ENCODE measurements at regions of chr13 and their contacts with region 1.

Region 1: GRCh38 chr13:19863323-19864023 is at the start of gene ZMYM5:
- DNase-seq: peak; percentile 100
- H3K4me3 ChIP-seq: peak within 1 kb of the TSS; percentile 70 to 94 (median 80)
- H3K27ac ChIP-seq: peak within 1 kb of the TSS; percentile 97 to 100 (median 99)
- H3K4me1 ChIP-seq: peaks cover 16 to 43% (median 25%) of the 10 kb centered on the region in 6 donors
- H3K27me3 ChIP-seq: no peaks in the 10 kb centered on the region
- CTCF ChIP-seq: peak in 7 of 11 experiments; percentile 10 to 70 (median 53)
- POLR2A ChIP-seq: peak; percentile 67 to 91 (median 72)
- total RNA-seq, gene ZMYM5: 13.2 to 24.4 (median 18.8) TPM

Region 2: GRCh38 chr13:19148561-19148960 is 714.9 kb before region 1 on chr13:
- intact Hi-C with region 1: no loop called
- DNase-seq: no peak
- H3K4me3 ChIP-seq: no peak overlapping the region
- H3K27ac ChIP-seq: no peak overlapping the region
- H3K4me1 ChIP-seq: peaks cover 0 to 11% (median 0%) of the 10 kb centered on the region in 6 donors
- H3K27me3 ChIP-seq: no peaks in the 10 kb centered on the region
- CTCF ChIP-seq: no peak
- POLR2A ChIP-seq: no peak

Region 3: DNA sequence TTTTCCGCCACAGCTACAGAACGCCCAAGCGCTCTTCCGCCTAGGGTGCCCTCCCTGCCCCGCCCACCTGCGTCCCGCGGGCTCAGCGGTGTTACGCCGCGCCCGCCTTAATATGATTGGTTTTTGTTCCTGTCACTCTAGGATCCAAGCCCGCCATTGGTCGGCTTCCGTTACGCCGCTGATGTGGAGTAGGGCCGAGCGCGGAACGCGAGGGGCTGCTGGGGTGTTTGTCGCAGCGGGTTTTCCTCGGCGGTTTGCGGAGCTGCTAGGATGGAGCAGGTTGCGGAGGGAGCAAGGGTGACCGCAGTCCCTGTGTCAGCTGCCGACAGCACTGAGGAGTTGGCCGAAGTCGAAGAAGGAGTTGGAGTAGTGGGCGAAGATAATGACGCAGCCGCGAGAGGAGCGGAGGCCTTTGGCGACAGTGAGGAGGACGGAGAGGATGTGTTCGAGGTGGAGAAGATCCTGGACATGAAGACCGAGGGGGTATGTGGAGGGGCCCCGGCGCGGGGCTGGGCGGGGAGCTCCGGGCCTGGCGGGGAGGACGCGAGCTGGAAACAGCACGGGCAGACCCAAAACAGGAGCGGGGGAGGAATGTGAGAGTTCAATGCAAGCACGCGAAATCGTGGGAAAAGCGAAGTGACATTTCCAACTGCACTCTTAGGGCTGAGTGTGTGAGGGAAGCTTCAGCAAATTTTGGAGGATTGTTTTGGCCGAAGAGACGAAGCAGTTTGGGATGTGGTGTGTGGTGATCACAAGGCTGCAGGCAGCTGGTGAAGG is 229.8 kb before region 1 on chr13 and contains the start of gene MPHOSPH8:
- intact Hi-C with region 1: loop called (anchors 10 kb)
- DNase-seq: peak; percentile 97
- H3K4me3 ChIP-seq: peak within 1 kb of the TSS; percentile 64 to 96 (median 77)
- H3K27ac ChIP-seq: peak within 1 kb of the TSS; percentile 87 to 98 (median 94)
- H3K4me1 ChIP-seq: peaks cover 14 to 55% (median 46%) of the 10 kb centered on the region in 6 donors
- H3K27me3 ChIP-seq: no peaks in the 10 kb centered on the region
- CTCF ChIP-seq: peak in 5 of 11 experiments; percentile 7 to 47 (median 22)
- POLR2A ChIP-seq: peak; percentile 5 to 57 (median 34)
- total RNA-seq, gene MPHOSPH8: 38.7 to 59.6 (median 47.7) TPM

Region 4: DNA sequence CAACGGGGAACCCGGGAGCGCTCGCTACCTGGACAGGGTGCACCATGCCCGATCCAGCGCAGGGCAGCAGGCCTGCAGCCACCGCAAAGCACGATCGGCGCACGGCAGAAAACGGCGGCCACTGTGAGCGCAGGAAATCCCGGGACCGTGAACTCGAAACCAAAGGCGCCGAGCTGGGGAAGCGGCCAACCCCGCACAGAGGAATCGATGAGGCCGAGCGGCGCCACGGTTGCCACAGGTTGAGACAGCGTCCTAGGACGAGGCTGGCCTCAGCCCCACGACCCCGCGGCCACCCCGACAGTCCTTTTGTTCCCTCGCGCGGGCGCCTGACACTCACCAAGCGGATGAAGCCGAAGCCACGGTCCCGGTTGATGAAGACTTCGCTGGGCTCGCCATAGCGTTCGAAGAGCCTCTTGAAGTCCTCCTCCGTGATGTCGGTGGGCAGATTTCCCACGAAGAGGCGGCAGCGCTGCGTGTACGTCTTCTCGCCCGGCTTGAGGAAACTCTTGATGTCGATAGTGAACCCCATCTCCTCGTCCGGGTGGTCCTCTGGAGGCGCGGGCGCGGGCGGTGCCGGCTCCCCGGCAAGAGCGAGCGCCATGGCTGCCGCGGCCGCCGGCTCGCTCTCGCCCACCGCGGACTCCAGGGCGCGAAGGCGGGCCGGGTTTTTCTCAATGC is 81.3 kb before region 1 on chr13:
- intact Hi-C with region 1: loop called (anchors 5 kb)
- DNase-seq: peak; percentile 94
- H3K4me3 ChIP-seq: peak overlapping the region; percentile 58 to 90 (median 80)
- H3K27ac ChIP-seq: peak overlapping the region; percentile 87 to 98 (median 96)
- H3K4me1 ChIP-seq: peaks cover 0 to 32% (median 13%) of the 10 kb centered on the region in 6 donors
- H3K27me3 ChIP-seq: no peaks in the 10 kb centered on the region
- CTCF ChIP-seq: no peak
- POLR2A ChIP-seq: no peak

Region 5: GRCh38 chr13:20064128-20064527 is 200.7 kb after region 1 on chr13:
- intact Hi-C with region 1: no loop called
- DNase-seq: no peak
- H3K4me3 ChIP-seq: no peak overlapping the region
- H3K27ac ChIP-seq: no peak overlapping the region
- H3K4me1 ChIP-seq: no peaks in the 10 kb centered on the region
- H3K27me3 ChIP-seq: no peaks in the 10 kb centered on the region
- CTCF ChIP-seq: no peak
- POLR2A ChIP-seq: no peak

Measured in spleen (tissue), 13 donors.